ENCODE measurements at regions of chr1 and their contacts with region 1.

Region 1: GRCh38 chr1:197915862-197916499 is 1.2 kb upstream of the LHX9 start:
- DNase-seq: no peak
- H3K4me3 Mint-ChIP-seq: peak overlapping the region; percentile 79
- H3K27ac Mint-ChIP-seq: no peak overlapping the region
- H3K4me1 Mint-ChIP-seq: peaks cover 74% of the 10 kb centered on the region
- H3K27me3 Mint-ChIP-seq: peaks cover 98% of the 10 kb centered on the region

Region 2: DNA sequence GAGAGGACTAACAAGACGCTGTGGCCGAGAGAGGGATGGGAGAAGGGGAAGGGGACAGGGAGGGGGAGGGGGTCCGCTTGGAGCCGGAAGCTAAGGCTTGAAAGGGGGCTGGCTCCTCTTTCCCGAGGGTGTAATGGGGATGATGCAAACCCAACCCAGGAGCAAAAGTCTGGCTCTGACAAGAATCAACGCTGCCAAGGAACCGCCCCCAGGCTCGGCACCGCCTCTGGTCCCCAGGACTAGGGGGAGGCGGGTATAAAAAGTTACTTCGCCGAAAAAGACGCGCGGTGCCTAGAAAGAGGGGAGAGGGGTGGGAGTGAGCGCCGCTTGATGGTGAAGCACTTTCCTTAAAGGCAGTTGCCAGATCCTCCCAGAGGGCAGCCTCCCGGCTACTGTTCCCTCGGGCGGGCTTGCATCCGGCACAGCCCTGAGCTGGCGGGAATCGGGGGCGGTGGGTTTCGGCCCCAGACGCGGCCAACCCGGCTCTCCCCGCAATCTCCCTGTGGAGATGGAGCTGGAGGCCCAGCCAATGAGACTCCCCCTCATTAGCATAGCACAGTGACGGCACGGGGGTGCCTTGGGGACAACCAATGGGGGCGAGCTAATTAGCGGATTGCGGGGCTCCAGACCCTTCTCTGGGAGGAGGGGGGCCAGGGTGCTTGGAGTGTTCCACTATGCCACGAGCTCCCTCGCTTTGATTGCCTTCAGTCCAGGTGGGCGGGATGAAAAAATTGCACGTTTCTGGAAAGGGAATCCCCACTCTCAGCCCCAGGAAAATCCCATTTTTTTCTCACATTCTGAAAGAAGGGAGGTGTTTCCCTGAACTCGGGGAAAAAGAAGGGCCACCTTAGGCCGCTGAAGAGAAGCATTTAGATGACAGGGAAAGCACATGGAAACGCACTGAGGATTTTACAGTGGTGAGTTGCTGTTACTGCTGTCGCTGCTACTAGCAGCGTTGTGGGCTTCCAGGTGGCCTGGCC is 1307.3 kb before region 1 on chr1 and contains the start of gene KCNT2:
- intact Hi-C with region 1: loop called (anchors 10 kb)
- DNase-seq: no peak
- H3K4me3 Mint-ChIP-seq: no peak within 1 kb of the TSS
- H3K27ac Mint-ChIP-seq: no peak within 1 kb of the TSS
- H3K4me1 Mint-ChIP-seq: peaks cover 3% of the 10 kb centered on the region
- H3K27me3 Mint-ChIP-seq: peaks cover 27% of the 10 kb centered on the region
- total RNA-seq, gene KCNT2: not detected in 2 replicates

Region 3: DNA sequence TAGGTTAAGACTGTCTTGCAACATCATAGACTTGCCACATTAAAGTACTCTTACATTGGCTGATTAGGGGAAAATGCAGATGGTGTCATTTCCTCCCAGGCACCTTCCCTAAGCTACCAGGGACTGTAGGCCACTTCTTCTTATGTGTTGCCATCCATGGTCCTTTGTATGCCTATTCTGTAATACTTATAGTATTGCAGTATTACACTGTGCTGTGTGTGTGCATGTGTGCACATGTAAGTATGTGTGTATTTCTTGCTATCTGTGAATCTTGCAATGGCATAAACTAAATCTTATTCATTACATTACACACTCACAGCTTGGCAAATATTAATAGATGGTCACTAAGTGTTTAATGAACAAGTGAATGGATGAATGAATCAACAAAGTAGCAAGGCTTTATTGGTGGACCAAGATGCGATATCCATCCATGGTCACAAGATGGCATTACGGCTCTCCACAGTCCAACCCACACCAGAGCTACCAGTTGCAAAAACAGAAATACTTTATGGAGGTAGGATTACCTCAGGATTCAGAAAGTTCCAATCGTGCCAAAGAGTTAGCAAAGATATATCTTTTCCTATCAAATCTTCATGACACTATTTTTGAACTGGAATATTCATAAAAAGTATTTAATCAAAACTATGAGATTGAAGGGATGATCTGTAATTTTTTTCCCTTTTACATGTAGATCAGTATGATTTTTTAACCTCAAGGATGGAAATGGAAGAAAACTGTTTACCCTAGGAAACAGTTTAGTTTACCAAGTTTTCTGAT is 300.9 kb before region 1 on chr1:
- intact Hi-C with region 1: loop called (anchors 5 kb)
- DNase-seq: no peak
- H3K4me3 Mint-ChIP-seq: no peak overlapping the region
- H3K27ac Mint-ChIP-seq: no peak overlapping the region
- H3K4me1 Mint-ChIP-seq: no peaks in the 10 kb centered on the region
- H3K27me3 Mint-ChIP-seq: no peaks in the 10 kb centered on the region

Region 4: GRCh38 chr1:197928849-197929336 is 12.9 kb after region 1 on chr1:
- intact Hi-C with region 1: no loop called
- DNase-seq: no peak
- H3K4me3 Mint-ChIP-seq: peak overlapping the region; percentile 75
- H3K27ac Mint-ChIP-seq: peak overlapping the region; percentile 30
- H3K4me1 Mint-ChIP-seq: peaks cover 19% of the 10 kb centered on the region
- H3K27me3 Mint-ChIP-seq: peaks cover 69% of the 10 kb centered on the region

Region 5: GRCh38 chr1:197948926-197949899 is 33.2 kb after region 1 on chr1:
- intact Hi-C with region 1: loop called (anchors 2 kb)
- DNase-seq: no peak
- H3K4me3 Mint-ChIP-seq: peak overlapping the region; percentile 4
- H3K27ac Mint-ChIP-seq: peak overlapping the region; percentile 83
- H3K4me1 Mint-ChIP-seq: peaks cover 40% of the 10 kb centered on the region
- H3K27me3 Mint-ChIP-seq: no peaks in the 10 kb centered on the region

Region 6: DNA sequence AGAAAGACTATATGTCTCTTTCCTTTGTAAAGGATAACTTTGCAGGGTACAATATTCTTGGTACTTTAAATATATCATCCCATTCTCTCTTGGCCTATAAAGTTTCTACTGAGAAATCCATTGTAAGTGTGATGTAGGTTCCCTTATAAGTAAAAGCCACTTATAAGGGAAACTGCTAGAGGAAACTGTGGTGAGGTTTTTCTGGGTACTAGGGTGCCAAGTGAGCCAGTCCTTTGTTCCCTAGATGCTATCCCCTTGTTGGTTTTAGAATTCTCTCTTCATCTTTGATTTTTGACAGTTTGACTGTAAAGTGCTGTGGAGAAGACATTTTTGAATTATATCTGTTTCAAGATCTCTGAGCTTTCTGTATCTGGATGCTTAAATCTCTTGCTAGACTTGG is 131.9 kb after region 1 on chr1:
- intact Hi-C with region 1: no loop called
- DNase-seq: peak; percentile 17
- H3K4me3 Mint-ChIP-seq: no peak overlapping the region
- H3K27ac Mint-ChIP-seq: peak overlapping the region; percentile 43
- H3K4me1 Mint-ChIP-seq: peaks cover 16% of the 10 kb centered on the region
- H3K27me3 Mint-ChIP-seq: peaks cover 3% of the 10 kb centered on the region

Region 7: DNA sequence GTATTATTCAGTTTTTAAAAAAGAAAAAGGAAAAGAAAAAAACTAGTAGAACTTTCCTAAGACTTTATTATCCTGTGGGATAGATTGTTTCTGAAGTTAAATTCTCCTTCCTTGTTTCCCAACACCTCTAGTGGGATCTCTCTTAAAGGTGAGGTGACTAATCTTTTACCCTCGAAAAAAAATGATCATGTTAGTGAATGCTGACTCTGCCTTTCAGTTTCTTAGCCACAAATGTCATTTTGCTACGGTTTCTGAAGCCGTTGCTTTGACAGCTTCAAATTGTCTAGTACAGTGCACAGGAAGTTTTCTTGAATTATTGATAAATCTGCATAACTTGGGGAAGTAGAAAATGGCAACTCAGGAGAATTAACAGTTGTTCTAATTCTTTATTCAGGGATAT is 227.8 kb after region 1 on chr1:
- intact Hi-C with region 1: loop called (anchors 5 kb)
- DNase-seq: no peak
- H3K4me3 Mint-ChIP-seq: no peak overlapping the region
- H3K27ac Mint-ChIP-seq: no peak overlapping the region
- H3K4me1 Mint-ChIP-seq: peaks cover 23% of the 10 kb centered on the region
- H3K27me3 Mint-ChIP-seq: no peaks in the 10 kb centered on the region

Measured in activated T-helper 2 cell treated with anti-CD3 and anti-CD28 coated beads, Interferon-gamma antibody, Interleukin-2, Interleukin-4, amounts not matched to agents 10 μg/mL and 5 μg/mL and 100 μg/mL, durations not matched to agents 14 hours and 24 hours and 36 hours (primary cell).